ENCODE measurements at regions of chr16 and their contacts with region 1.

Region 1: DNA sequence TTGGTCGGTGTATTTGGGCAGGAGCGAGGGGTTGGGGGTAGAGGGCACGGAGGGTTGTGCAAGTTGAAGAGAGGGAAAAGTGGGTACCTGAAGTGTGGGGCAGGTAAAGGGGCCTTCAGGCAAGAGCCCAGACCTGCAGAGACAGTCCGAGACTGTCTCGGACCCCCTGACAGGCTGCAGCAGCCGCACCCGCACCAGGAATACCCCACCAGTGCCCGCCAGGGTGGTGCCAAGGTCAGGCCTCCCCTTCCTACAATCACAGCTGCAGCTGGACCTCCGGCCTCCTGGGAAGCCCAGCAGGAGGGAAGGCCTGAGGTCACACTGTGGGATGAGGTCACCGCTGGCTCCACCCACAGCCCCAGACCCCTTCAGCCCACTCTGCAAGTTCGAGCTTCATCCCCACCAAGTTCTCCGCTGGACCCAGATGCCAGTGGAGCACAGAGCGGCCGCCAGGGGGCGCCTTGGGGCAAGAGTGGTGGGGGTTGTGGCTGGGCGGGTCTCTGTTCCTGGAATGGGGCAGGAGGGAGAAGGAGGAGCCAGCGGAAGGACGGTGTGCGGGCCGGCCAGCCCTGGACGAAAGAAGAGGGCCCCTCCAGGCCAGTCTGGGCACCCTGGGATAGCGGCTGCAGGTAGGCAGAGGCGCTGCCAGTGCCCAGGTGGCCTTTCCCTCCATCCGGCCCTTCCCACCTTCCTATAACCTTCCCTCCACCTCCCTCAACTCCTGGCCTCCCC is at the start of gene HSD3B7:
- DNase-seq: peak; percentile 87 to 94 (median 92)
- H3K4me3 ChIP-seq: peak within 1 kb of the TSS in 2 of 4 donors; percentile 1 to 55
- H3K27ac ChIP-seq: peak within 1 kb of the TSS in 2 of 5 donors; percentile 54 to 86
- H3K4me1 ChIP-seq: peaks cover 9 to 13% of the 10 kb centered on the region in 2 donors
- H3K27me3 ChIP-seq: no peaks in the 10 kb centered on the region
- CTCF ChIP-seq: peak; percentile 95 to 98 (median 98)
- POLR2A ChIP-seq: no peak
- total RNA-seq, gene HSD3B7: 2.7 to 78.8 (median 35.5) TPM

Region 2: GRCh38 chr16:30922960-30923535 is 61.8 kb before region 1 on chr16:
- intact Hi-C with region 1: loop called in 1 of 2 experiments (anchors 10 kb)
- DNase-seq: peak; percentile 100
- H3K4me3 ChIP-seq: peak overlapping the region in 3 of 4 donors; percentile 15 to 92 (median 87)
- H3K27ac ChIP-seq: peak overlapping the region; percentile 58 to 95 (median 87)
- H3K4me1 ChIP-seq: peaks cover 7 to 13% of the 10 kb centered on the region in 2 donors
- H3K27me3 ChIP-seq: no peaks in the 10 kb centered on the region
- CTCF ChIP-seq: no peak
- POLR2A ChIP-seq: peak; percentile 57 to 76

Region 3: GRCh38 chr16:31044190-31044481 is 59.3 kb after region 1 on chr16:
- intact Hi-C with region 1: loop called (anchors 5 to 10 kb)
- DNase-seq: no peak
- H3K4me3 ChIP-seq: no peak overlapping the region
- H3K27ac ChIP-seq: no peak overlapping the region
- H3K4me1 ChIP-seq: peaks cover 0 to 4% of the 10 kb centered on the region in 2 donors
- H3K27me3 ChIP-seq: no peaks in the 10 kb centered on the region
- CTCF ChIP-seq: no peak
- POLR2A ChIP-seq: no peak

Region 4: GRCh38 chr16:31142109-31143010 is 157.5 kb after region 1 on chr16:
- intact Hi-C with region 1: loop called in 1 of 2 experiments (anchors 10 kb)
- DNase-seq: peak; percentile 99
- H3K4me3 ChIP-seq: peak overlapping the region in 2 of 4 donors; percentile 18 to 53
- H3K27ac ChIP-seq: peak overlapping the region; percentile 70 to 94 (median 91)
- H3K4me1 ChIP-seq: peaks cover 23 to 26% of the 10 kb centered on the region in 2 donors
- H3K27me3 ChIP-seq: no peaks in the 10 kb centered on the region
- CTCF ChIP-seq: peak; percentile 83 to 100 (median 96)
- POLR2A ChIP-seq: peak in 1 of 2 donors; percentile 81

Region 5: DNA sequence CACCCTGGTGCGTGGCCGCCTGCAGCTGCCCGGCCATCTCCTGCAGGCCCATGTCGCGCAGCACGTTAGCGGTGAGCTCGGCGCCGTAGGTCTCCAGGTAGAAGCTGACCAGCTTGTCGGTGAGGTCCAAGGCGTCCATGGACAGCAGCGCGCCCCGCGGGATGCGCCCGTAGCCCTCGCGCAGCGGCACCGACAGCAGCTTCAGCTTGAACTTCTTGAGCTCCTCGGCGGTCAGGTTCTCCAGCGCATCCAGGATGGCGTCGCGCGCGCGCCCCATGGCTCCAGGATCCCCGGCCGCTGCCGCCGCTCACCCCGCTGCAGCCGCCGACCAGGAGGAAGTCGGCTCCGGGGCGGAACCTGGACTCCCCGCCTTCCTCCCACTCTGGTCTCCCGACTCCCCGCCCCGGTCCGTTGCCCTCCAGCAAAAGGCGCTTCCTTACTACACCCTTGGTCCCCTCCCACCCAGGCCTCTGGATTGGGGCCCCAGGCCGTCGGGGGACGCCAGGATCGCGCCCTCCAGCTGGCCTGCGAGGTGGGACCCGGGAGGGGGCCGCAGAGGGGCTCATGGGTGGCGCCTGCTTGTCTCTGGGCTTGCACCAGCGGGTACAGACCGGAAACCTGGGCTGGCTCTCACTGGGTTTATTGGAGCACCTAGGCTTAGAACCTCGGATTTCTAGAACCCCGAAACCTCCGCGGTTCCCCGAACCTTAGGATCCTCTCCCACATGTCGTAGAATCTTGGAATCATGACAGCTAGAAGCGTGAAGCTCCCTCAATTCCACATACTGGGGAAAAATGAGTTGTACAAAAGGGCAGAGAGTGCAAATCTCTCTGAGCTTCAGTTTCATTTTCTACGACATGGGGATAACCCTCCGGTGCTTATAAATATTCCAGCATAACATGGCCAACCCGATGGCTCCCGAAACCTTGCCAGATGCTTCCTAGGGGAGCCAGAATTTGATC is 217.9 kb after region 1 on chr16 and contains the start of gene PYCARD:
- intact Hi-C with region 1: loop called in 1 of 2 experiments (anchors 10 kb)
- DNase-seq: peak in 5 of 7 donors; percentile 38 to 53 (median 46)
- H3K4me3 ChIP-seq: peak within 1 kb of the TSS in 2 of 4 donors; percentile 35 to 70
- H3K27ac ChIP-seq: peak within 1 kb of the TSS; percentile 10 to 68 (median 43)
- H3K4me1 ChIP-seq: peaks cover 0 to 19% of the 10 kb centered on the region in 2 donors
- H3K27me3 ChIP-seq: no peaks in the 10 kb centered on the region
- CTCF ChIP-seq: no peak
- POLR2A ChIP-seq: no peak
- total RNA-seq, gene PYCARD: 9.6 to 54.4 (median 23.6) TPM

Region 6: DNA sequence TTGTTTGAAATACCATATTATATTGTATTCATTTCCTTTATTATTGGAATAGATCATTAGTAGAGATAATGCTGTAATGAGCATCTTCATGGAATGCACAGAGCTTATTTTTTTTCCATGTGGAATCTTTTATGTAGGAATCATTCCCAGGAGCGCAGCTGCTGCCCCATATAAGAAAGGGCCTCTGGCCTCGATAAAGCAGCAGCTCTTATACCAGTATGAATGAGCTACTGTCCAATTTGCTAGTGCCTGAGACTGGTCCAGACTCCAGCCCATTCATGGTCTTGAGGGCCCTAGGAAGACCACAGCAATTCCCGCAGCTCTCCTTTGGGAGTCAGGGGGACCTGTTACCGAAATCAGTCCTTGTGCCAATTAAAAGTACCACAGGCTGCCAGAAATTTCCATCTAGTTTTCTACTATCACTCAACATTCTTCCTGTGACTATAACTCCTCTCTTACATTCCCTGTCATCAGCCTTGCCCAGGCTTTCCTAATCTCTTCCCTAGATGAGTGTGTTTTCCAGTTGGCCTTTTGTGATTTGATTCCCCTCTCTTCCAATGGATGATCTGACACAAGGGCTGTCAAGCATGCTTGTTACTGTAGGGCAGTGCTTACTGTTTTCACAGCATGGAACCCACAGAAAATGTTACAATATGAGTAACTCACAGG is 455.8 kb after region 1 on chr16:
- intact Hi-C with region 1: loop called (anchors 5 to 10 kb)
- DNase-seq: no peak
- H3K4me3 ChIP-seq: no peak overlapping the region
- H3K27ac ChIP-seq: no peak overlapping the region
- H3K4me1 ChIP-seq: peaks cover 7 to 9% of the 10 kb centered on the region in 2 donors
- H3K27me3 ChIP-seq: no peaks in the 10 kb centered on the region
- CTCF ChIP-seq: no peak
- POLR2A ChIP-seq: no peak

Region 7: GRCh38 chr16:31868691-31869167 is 883.9 kb after region 1 on chr16:
- intact Hi-C with region 1: loop called in 1 of 2 experiments (anchors 10 kb)
- DNase-seq: peak; percentile 75 to 93 (median 83)
- H3K4me3 ChIP-seq: no peak overlapping the region
- H3K27ac ChIP-seq: peak overlapping the region in 3 of 5 donors; percentile 32 to 81 (median 60)
- H3K4me1 ChIP-seq: peaks cover 0 to 3% of the 10 kb centered on the region in 2 donors
- H3K27me3 ChIP-seq: no peaks in the 10 kb centered on the region
- CTCF ChIP-seq: peak; percentile 78 to 89 (median 80)
- POLR2A ChIP-seq: no peak

Measured in adrenal gland (tissue), 19 donors.